AG04449 (cell line): ENCODE measurements at regions of chr17 and their contacts with region 1.

Region 1: GRCh38 chr17:64129764-64130558 is at the start of gene ERN1:
- DNase-seq: peak; percentile 56
- H3K4me3 ChIP-seq: peak within 1 kb of the TSS; percentile 64
- CTCF ChIP-seq: no peak

Region 2: DNA sequence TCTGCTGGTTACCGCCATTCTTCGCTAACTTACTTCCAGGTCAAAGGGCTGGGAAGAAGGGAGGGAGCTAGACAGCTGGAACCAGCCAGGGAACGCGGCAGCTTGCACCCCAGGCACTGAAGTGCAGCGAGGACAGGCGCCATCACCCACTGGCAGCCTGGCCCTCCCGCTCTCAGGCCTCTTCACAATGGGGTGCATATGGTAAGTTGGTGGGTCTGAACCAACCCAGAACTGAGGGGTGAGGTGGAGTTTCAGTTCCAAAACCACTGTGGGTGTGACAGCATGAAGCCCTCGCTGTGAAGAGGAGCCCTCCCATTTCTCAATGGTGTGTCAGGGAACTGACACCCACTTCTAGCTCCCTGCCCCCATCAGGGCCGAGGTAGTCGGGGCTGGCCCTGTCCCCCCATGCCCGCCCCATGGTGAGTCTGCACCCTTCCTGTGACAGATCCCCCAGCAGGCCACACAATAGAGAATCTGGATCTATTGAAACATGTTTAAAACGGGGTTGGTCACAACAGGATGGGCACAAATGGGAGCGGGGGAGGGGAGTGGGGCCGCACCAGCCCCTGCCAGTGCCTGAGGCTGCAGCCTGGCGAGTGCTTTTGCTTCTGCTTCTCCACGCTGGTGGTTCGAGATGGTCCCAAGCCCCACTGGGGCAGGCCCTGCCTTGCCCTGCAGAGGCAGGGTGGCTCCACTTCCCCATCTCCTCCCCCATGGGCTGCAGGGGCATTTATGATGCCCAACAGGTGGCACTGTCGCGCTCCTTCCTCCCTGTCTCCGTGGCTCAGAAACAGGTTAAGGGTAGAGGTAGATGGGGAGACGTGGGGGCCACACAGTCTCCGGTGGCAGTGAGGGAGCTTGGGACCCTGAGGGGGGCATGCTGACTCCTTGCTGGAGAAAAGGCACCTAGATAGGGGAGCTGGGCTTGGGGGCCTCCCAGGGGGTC is 432.3 kb before region 1 on chr17:
- CTCF ChIA-PET with region 1: no interaction called
- POLR2A ChIA-PET with region 1: no interaction called
- DNase-seq: no peak
- H3K4me3 ChIP-seq: no peak overlapping the region
- CTCF ChIP-seq: peak; percentile 66

Region 3: GRCh38 chr17:63946440-63947367 is 183.3 kb before region 1 on chr17:
- CTCF ChIA-PET with region 1: interaction called, 14 read pairs
- POLR2A ChIA-PET with region 1: no interaction called
- DNase-seq: no peak
- H3K4me3 ChIP-seq: no peak overlapping the region
- CTCF ChIP-seq: peak; percentile 77

Region 4: DNA sequence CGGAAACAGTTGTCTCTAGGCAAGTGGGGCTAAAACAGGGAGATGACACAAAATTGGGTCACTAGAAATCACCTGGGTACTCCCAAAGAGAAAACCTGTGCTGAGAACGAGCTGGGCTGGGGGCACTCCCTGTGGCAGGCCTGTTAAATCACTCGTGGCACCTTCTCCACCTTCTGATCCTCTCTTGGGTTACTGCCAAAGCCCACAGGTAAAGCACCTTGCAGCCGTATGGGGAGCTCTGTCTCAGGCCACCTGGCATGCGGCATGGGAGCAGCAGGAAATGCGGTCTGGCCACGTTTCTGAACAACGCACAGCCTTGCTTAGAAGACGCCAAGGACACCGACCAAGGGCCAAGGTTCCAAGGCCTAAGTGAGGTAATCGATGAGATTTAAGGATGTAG is 88.0 kb before region 1 on chr17:
- CTCF ChIA-PET with region 1: interaction called, 34 read pairs
- POLR2A ChIA-PET with region 1: no interaction called
- DNase-seq: no peak
- H3K4me3 ChIP-seq: no peak overlapping the region
- CTCF ChIP-seq: no peak

Region 5: GRCh38 chr17:64074704-64075426 is 55.1 kb before region 1 on chr17:
- CTCF ChIA-PET with region 1: interaction called, 13 read pairs
- POLR2A ChIA-PET with region 1: interaction called, 4 read pairs
- DNase-seq: peak; percentile 41
- H3K4me3 ChIP-seq: no peak overlapping the region
- CTCF ChIP-seq: no peak

Region 6: GRCh38 chr17:64145757-64146417 is 15.9 kb after region 1 on chr17:
- CTCF ChIA-PET with region 1: interaction called, 76 read pairs
- POLR2A ChIA-PET with region 1: interaction called, 35 read pairs
- DNase-seq: peak; percentile 100
- H3K4me3 ChIP-seq: peak overlapping the region; percentile 86
- CTCF ChIP-seq: no peak